ENCODE measurements at regions of chr12 and their contacts with region 1.

Region 1: GRCh38 chr12:51419425-51420208 is 5.0 kb upstream of the SLC4A8 start:
- DNase-seq: no peak
- ATAC-seq: peak; percentile 52
- H3K4me3 Mint-ChIP-seq: peak overlapping the region; percentile 44
- H3K27ac Mint-ChIP-seq: peak overlapping the region; percentile 73
- H3K4me1 Mint-ChIP-seq: peaks cover 45% of the 10 kb centered on the region
- H3K27me3 Mint-ChIP-seq: no peaks in the 10 kb centered on the region
- CTCF ChIP-seq: no peak

Region 2: DNA sequence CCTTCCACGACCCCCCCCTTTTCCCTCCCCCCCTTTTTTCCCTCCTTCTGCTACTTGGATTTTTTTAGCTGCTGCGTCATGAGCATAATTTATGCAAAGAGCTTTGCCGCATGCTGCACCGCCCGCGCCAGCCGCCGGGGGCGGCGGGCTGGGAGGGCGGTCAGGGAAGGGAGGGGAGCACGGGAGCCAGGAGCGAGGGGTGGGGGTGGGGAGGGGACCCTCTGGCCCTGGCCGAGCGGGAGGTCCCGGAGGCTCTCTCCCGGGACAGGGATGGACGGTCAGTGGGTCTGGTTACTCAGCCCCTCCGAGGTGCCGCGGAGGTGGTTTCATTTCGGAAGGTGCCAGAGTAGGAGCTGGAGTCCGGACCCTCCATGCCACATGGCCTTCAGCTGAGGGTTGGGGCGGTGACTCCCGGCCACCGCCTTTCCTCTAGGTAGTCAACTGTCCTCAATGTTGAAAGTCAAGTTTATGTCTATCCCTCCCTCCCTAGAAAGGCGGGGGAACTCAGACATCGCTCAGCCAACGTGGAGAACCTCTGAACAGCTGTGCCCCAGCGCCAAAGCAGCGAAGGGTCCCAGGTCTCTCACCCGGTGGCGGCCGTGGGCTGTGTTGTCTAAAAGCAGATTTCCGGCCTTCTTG is 201.5 kb before region 1 on chr12 and contains the start of gene POU6F1:
- CTCF ChIA-PET with region 1: no interaction called
- POLR2A ChIA-PET with region 1: no interaction called
- DNase-seq: peak; percentile 74
- ATAC-seq: peak; percentile 75
- H3K4me3 Mint-ChIP-seq: peak within 1 kb of the TSS; percentile 70
- H3K27ac Mint-ChIP-seq: peak within 1 kb of the TSS; percentile 54
- H3K4me1 Mint-ChIP-seq: peaks cover 18% of the 10 kb centered on the region
- H3K27me3 Mint-ChIP-seq: no peaks in the 10 kb centered on the region
- CTCF ChIP-seq: peak; percentile 34; the same call in 1 of the 2 replicates
- total RNA-seq, gene POU6F1: 10.2 to 14.5 TPM (median 11.2 TPM) in 3 replicates

Region 3: GRCh38 chr12:51284476-51284875 is 135.1 kb before region 1 on chr12:
- CTCF ChIA-PET with region 1: no interaction called
- POLR2A ChIA-PET with region 1: no interaction called
- DNase-seq: no peak
- ATAC-seq: no peak
- H3K4me3 Mint-ChIP-seq: no peak overlapping the region
- H3K27ac Mint-ChIP-seq: no peak overlapping the region
- H3K4me1 Mint-ChIP-seq: peaks cover 4% of the 10 kb centered on the region; the same call in 1 of the 2 replicates
- H3K27me3 Mint-ChIP-seq: no peaks in the 10 kb centered on the region
- CTCF ChIP-seq: no peak

Region 4: GRCh38 chr12:51371295-51371953 is 48.2 kb before region 1 on chr12:
- CTCF ChIA-PET with region 1: interaction called, 11 read pairs
- POLR2A ChIA-PET with region 1: no interaction called
- DNase-seq: peak; percentile 29
- ATAC-seq: peak; percentile 77
- H3K4me3 Mint-ChIP-seq: no peak overlapping the region
- H3K27ac Mint-ChIP-seq: peak overlapping the region; percentile 93
- H3K4me1 Mint-ChIP-seq: peaks cover 28% of the 10 kb centered on the region
- H3K27me3 Mint-ChIP-seq: no peaks in the 10 kb centered on the region
- CTCF ChIP-seq: no peak

Region 5: DNA sequence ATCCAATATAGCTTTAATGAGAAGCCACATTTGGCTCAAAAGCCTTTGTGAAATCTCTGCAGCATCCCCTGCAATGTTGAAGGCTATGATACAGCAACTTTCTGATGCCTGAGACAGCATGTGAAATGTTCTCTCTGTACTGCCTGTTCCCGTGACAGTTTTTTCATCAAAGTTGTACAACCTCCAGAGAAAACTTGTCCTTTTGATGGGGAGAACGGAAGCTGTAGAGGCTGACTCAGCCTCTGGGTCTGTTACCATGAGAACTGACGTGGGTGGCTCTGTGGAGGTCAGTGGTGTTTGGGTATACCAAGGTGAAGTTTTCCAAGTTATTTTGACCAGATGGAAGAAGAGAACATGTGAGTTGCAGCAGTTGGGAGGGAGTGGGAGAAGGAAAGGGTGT is 22.0 kb after region 1 on chr12:
- CTCF ChIA-PET with region 1: no interaction called
- POLR2A ChIA-PET with region 1: no interaction called
- DNase-seq: no peak
- ATAC-seq: no peak
- H3K4me3 Mint-ChIP-seq: no peak overlapping the region
- H3K27ac Mint-ChIP-seq: no peak overlapping the region
- H3K4me1 Mint-ChIP-seq: peaks cover 4% of the 10 kb centered on the region
- H3K27me3 Mint-ChIP-seq: no peaks in the 10 kb centered on the region
- CTCF ChIP-seq: no peak

Region 6: GRCh38 chr12:51496895-51497294 is 77.3 kb after region 1 on chr12:
- CTCF ChIA-PET with region 1: no interaction called
- POLR2A ChIA-PET with region 1: no interaction called
- DNase-seq: no peak
- ATAC-seq: no peak
- H3K4me3 Mint-ChIP-seq: no peak overlapping the region
- H3K27ac Mint-ChIP-seq: no peak overlapping the region
- H3K4me1 Mint-ChIP-seq: no peaks in the 10 kb centered on the region
- H3K27me3 Mint-ChIP-seq: no peaks in the 10 kb centered on the region
- CTCF ChIP-seq: no peak